ENCODE measurements at regions of chr11 and their contacts with region 1.

Region 1: DNA sequence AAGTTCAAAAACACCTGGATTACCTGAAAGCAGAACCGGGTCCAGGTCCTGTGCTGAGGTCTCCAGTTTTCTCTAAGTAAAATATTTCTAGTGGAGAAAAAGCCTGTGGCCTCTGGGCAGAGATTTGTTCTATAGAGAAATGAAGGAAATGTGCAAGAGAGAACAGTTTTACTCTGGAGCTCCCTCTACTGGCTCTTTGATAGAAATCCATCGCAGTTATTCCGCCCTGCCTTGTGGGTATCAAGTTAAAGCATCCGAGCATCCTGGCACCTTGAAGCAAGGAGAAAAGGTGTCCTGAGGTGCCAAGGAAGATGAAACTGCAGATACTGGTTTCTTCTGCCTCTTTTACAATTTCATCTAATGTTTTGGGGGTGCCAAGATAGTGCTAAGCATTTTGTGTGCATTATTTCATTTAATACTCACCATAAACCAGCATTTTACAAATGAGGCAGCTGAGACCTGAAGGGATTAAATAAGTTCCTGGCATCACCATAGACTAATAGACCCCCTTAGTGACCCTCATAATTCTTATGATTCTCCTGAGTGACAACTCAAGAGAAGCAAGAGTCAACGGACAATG is 113.1 kb upstream of the HSD17B12 start:
- DNase-seq: no peak
- H3K4me3 Mint-ChIP-seq: no peak overlapping the region
- H3K27ac Mint-ChIP-seq: no peak overlapping the region
- H3K4me1 Mint-ChIP-seq: no peaks in the 10 kb centered on the region
- H3K27me3 Mint-ChIP-seq: peaks cover 61% of the 10 kb centered on the region

Region 2: GRCh38 chr11:43504316-43504950 is 63.1 kb before region 1 on chr11:
- CTCF ChIA-PET with region 1: interaction called, 6 read pairs
- intact Hi-C with region 1: loop called (anchors 1 kb)
- DNase-seq: peak; percentile 17
- H3K4me3 Mint-ChIP-seq: no peak overlapping the region
- H3K27ac Mint-ChIP-seq: no peak overlapping the region
- H3K4me1 Mint-ChIP-seq: no peaks in the 10 kb centered on the region
- H3K27me3 Mint-ChIP-seq: peaks cover 6% of the 10 kb centered on the region

Region 3: DNA sequence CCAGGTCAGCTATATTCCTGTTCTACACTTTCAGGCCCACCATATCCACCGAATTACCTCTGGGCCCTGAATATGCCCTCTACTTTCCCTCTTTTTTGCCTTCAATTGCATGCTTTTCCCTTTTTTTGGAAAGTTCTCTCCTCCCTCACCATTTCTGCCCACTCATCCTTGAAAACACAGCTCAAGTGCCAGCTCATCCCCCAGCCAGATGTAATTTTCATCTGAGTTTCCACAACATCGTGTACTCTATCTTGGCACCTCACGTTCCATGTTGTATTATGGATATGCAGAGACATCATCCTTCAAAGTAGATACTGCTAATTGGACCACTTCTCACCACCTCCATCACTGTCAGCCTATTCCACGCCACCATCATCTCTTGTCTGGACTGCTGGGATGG is 16.8 kb before region 1 on chr11:
- CTCF ChIA-PET with region 1: interaction called, 12 read pairs
- intact Hi-C with region 1: no loop called
- DNase-seq: no peak
- H3K4me3 Mint-ChIP-seq: no peak overlapping the region
- H3K27ac Mint-ChIP-seq: no peak overlapping the region
- H3K4me1 Mint-ChIP-seq: peaks cover 2% of the 10 kb centered on the region
- H3K27me3 Mint-ChIP-seq: peaks cover 61% of the 10 kb centered on the region

Region 4: GRCh38 chr11:43579171-43579918 is 11.9 kb after region 1 on chr11:
- CTCF ChIA-PET with region 1: interaction called, 13 read pairs
- intact Hi-C with region 1: no loop called
- DNase-seq: peak; percentile 58
- H3K4me3 Mint-ChIP-seq: peak overlapping the region; percentile 72
- H3K27ac Mint-ChIP-seq: no peak overlapping the region
- H3K4me1 Mint-ChIP-seq: peaks cover 54% of the 10 kb centered on the region
- H3K27me3 Mint-ChIP-seq: peaks cover 93% of the 10 kb centered on the region

Region 5: GRCh38 chr11:43962383-43963278 is 395.1 kb after region 1 on chr11:
- CTCF ChIA-PET with region 1: no interaction called
- intact Hi-C with region 1: no loop called
- DNase-seq: no peak
- H3K4me3 Mint-ChIP-seq: no peak overlapping the region
- H3K27ac Mint-ChIP-seq: no peak overlapping the region
- H3K4me1 Mint-ChIP-seq: no peaks in the 10 kb centered on the region
- H3K27me3 Mint-ChIP-seq: peaks cover 21% of the 10 kb centered on the region